Naive thymus-derived CD4-positive, alpha-beta T cell (primary cell): ENCODE measurements at regions of chr15 and their contacts with region 1.

Region 1: GRCh38 chr15:40307421-40308211 is at the start of gene PLCB2:
- DNase-seq: peak; percentile 57 to 83 (median 79)
- ATAC-seq: peak; percentile 83
- H3K4me3 ChIP-seq: peak within 1 kb of the TSS; percentile 99
- H3K4me3 Mint-ChIP-seq: peak within 1 kb of the TSS; percentile 93 to 99 (median 96)
- H3K27ac ChIP-seq: peak within 1 kb of the TSS; percentile 94
- H3K27ac Mint-ChIP-seq: peak within 1 kb of the TSS; percentile 93 to 99 (median 97)
- H3K4me1 ChIP-seq: peaks cover 16 to 22% of the 10 kb centered on the region in 2 donors
- H3K4me1 Mint-ChIP-seq: peaks cover 31 to 62% (median 48%) of the 10 kb centered on the region in 7 donors
- H3K27me3 ChIP-seq: no peaks in the 10 kb centered on the region
- H3K27me3 Mint-ChIP-seq: peaks cover 0 to 13% (median 0%) of the 10 kb centered on the region in 5 donors
- total RNA-seq, gene PLCB2: 179 to 359 (median 186) TPM

Region 2: DNA sequence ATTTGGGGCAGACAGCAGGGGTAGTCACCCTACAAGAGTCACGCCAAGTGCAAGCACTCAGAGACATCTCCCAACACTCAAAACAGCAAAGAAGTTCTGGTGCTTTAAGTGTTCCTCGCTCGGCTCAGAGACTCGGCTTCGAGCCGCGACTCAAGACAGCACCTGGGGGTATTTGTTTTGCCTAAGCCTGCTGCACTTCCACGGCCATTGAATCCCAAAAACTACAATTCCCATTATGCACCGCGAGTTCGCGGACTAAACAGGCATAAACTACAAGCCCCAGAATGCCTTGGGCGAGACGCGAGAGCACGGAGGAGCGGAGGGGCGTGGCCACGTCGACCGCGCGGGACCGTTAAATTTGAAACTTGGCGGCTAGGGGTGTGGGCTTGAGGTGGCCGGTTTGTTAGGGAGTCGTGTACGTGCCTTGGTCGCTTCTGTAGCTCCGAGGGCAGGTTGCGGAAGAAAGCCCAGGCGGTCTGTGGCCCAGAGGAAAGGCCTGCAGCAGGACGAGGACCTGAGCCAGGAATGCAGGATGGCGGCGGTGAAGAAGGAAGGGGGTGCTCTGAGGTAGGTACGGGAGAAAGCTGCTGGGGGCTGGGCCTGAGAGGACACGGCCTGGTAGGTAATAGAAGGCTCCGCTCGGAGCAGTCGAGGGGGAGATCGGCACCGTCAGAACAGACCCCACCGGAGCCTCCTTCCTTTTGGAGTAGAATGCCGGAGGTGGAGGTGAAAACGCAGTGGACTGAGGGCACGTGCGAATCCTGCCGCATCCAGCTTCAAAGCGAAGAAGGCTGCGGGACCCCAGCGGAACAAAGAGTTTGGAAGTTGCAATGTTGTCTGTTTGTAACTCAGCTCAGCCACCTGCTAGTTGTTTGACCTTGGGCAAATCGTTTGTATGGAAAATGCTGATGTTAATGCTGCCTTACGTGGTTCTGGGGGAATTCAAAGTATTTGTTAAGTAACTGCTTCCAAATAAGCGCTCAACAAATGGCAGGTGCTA is 146.6 kb before region 1 on chr15 and contains the start of gene BUB1B:
- CTCF ChIA-PET with region 1: interaction called, 3 read pairs
- POLR2A ChIA-PET with region 1: no interaction called
- intact Hi-C with region 1: loop called in 1 of 2 experiments (anchors 2 kb)
- DNase-seq: peak; percentile 79 to 94 (median 92)
- ATAC-seq: peak; percentile 100
- H3K4me3 ChIP-seq: peak within 1 kb of the TSS; percentile 80
- H3K4me3 Mint-ChIP-seq: peak within 1 kb of the TSS in 2 of 10 donors; percentile 15 to 51
- H3K27ac ChIP-seq: peak within 1 kb of the TSS; percentile 29
- H3K27ac Mint-ChIP-seq: no peak within 1 kb of the TSS
- H3K4me1 ChIP-seq: peaks cover 0 to 7% of the 10 kb centered on the region in 2 donors
- H3K4me1 Mint-ChIP-seq: peaks cover 0 to 12% (median 0%) of the 10 kb centered on the region in 7 donors
- H3K27me3 ChIP-seq: no peaks in the 10 kb centered on the region
- H3K27me3 Mint-ChIP-seq: no peaks in the 10 kb centered on the region
- total RNA-seq, gene BUB1B: 0.41 to 55.7 (median 1.2) TPM

Region 3: GRCh38 chr15:40232625-40233070 is 75.0 kb before region 1 on chr15:
- CTCF ChIA-PET with region 1: no interaction called
- POLR2A ChIA-PET with region 1: no interaction called
- intact Hi-C with region 1: no loop called
- DNase-seq: no peak
- ATAC-seq: no peak
- H3K4me3 ChIP-seq: no peak overlapping the region
- H3K4me3 Mint-ChIP-seq: no peak overlapping the region
- H3K27ac ChIP-seq: no peak overlapping the region
- H3K27ac Mint-ChIP-seq: no peak overlapping the region
- H3K4me1 ChIP-seq: no peaks in the 10 kb centered on the region
- H3K4me1 Mint-ChIP-seq: peaks cover 0 to 3% (median 0%) of the 10 kb centered on the region in 7 donors
- H3K27me3 ChIP-seq: no peaks in the 10 kb centered on the region
- H3K27me3 Mint-ChIP-seq: peaks cover 1 to 5% (median 1%) of the 10 kb centered on the region in 5 donors

Region 4: DNA sequence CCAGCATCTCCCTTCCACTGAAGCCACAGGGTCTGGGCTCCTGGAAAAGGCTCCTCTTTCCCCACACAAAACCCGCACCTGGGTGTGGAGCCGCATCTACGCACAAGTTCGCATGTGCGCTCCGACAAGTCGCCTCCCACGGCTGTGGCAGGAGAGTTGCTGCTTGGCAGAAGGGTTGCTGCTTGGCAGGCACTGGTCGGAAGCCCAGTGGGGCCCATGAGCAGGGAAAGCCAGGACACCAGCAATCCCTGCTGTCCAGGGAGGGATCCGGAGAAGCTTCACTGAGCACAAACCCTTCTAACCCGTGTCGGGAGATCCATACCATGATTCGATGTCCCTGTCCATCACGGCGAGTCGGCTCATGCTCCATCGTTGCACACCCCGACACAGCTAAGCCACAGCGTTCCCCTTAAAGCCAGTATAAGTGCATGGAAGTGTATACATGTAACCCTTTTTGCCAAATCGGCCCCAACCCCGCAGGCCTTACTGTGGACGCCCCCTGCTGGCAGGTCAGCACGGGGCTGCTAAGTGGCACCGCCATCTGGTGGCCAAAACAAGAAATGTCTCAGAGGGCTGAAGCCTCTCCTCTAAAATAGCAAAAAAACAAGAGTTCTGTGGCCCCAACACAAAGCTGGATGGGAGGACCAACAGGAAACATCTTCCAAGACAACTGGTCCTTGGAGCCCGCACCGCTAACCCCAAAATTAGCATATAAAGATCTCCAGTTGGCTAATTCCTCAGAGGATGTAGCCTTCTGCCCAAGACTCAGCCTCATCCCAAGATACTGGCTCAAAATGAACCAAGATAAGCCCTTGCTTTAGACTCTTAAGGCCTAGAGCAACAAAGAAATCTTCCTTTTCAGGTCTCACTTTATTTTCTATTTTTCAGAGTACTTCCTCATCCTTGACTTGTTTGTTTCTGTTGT is 33.0 kb before region 1 on chr15:
- CTCF ChIA-PET with region 1: interaction called, 143 read pairs
- POLR2A ChIA-PET with region 1: interaction called, 29 read pairs
- intact Hi-C with region 1: loop called (anchors 1 kb)
- DNase-seq: peak; percentile 71 to 95 (median 88)
- ATAC-seq: peak; percentile 94
- H3K4me3 ChIP-seq: no peak overlapping the region
- H3K4me3 Mint-ChIP-seq: peak overlapping the region in 1 of 10 donors; percentile 45
- H3K27ac ChIP-seq: no peak overlapping the region
- H3K27ac Mint-ChIP-seq: peak overlapping the region in 6 of 9 donors; percentile 17 to 70 (median 50)
- H3K4me1 ChIP-seq: peaks cover 0 to 3% of the 10 kb centered on the region in 2 donors
- H3K4me1 Mint-ChIP-seq: peaks cover 0 to 17% (median 5%) of the 10 kb centered on the region in 7 donors
- H3K27me3 ChIP-seq: no peaks in the 10 kb centered on the region
- H3K27me3 Mint-ChIP-seq: peaks cover 12 to 29% (median 16%) of the 10 kb centered on the region in 5 donors

Region 5: GRCh38 chr15:40290918-40291574 is 16.6 kb before region 1 on chr15:
- CTCF ChIA-PET with region 1: interaction called, 5 read pairs
- POLR2A ChIA-PET with region 1: interaction called, 30 read pairs
- intact Hi-C with region 1: no loop called
- DNase-seq: no peak
- ATAC-seq: no peak
- H3K4me3 ChIP-seq: no peak overlapping the region
- H3K4me3 Mint-ChIP-seq: no peak overlapping the region
- H3K27ac ChIP-seq: no peak overlapping the region
- H3K27ac Mint-ChIP-seq: no peak overlapping the region
- H3K4me1 ChIP-seq: no peaks in the 10 kb centered on the region
- H3K4me1 Mint-ChIP-seq: peaks cover 0 to 4% (median 0%) of the 10 kb centered on the region in 7 donors
- H3K27me3 ChIP-seq: no peaks in the 10 kb centered on the region
- H3K27me3 Mint-ChIP-seq: no peaks in the 10 kb centered on the region

Region 6: GRCh38 chr15:40330368-40330836 is 22.8 kb after region 1 on chr15:
- CTCF ChIA-PET with region 1: interaction called, 366 read pairs
- POLR2A ChIA-PET with region 1: interaction called, 35 read pairs
- intact Hi-C with region 1: no loop called
- DNase-seq: no peak
- ATAC-seq: no peak
- H3K4me3 ChIP-seq: no peak overlapping the region
- H3K4me3 Mint-ChIP-seq: no peak overlapping the region
- H3K27ac ChIP-seq: no peak overlapping the region
- H3K27ac Mint-ChIP-seq: no peak overlapping the region
- H3K4me1 ChIP-seq: peaks cover 0 to 15% of the 10 kb centered on the region in 2 donors
- H3K4me1 Mint-ChIP-seq: peaks cover 1 to 45% (median 39%) of the 10 kb centered on the region in 7 donors
- H3K27me3 ChIP-seq: no peaks in the 10 kb centered on the region
- H3K27me3 Mint-ChIP-seq: peaks cover 0 to 2% (median 0%) of the 10 kb centered on the region in 5 donors

Region 7: DNA sequence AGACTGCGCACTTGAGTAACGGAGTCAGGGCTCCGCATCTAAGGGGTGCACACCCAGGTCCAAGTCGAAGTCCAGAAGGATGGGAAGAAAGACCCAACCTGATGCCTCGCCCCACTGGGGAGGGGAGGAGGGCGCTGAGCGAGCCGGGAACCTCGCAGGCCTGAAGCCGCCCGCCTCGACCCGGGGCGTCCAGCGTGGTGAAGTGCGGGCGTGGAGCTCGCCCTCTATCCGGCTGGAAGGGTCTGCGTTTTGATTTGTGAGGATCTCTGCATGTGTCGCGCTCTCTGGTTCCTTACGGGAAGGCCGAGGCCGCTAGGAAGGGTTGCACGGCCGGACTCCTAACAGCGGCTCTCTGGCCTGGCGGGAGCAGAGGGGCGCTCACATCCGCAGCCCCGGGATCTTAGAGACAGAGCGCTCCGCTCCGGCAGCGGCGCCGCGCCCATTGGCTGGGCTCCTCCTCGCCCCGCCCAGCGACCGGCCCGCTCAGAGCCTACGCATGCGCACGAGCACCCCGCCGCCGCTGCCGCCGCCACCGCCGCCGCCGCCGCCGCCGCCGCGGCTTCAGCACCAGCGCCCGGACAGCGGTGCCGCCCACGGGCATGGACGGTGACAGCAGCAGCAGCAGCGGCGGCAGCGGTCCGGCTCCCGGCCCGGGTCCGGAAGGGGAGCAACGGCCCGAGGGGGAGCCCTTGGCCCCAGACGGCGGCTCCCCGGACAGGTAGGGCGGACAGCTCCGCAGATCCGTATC is 50.3 kb after region 1 on chr15 and contains the start of gene DISP2:
- CTCF ChIA-PET with region 1: no interaction called
- POLR2A ChIA-PET with region 1: no interaction called
- intact Hi-C with region 1: loop called in 1 of 2 experiments (anchors 5 kb)
- DNase-seq: peak; percentile 80 to 97 (median 91)
- ATAC-seq: peak; percentile 94
- H3K4me3 ChIP-seq: peak within 1 kb of the TSS; percentile 63
- H3K4me3 Mint-ChIP-seq: peak within 1 kb of the TSS; percentile 75 to 90 (median 83)
- H3K27ac ChIP-seq: no peak within 1 kb of the TSS
- H3K27ac Mint-ChIP-seq: peak within 1 kb of the TSS in 2 of 9 donors; percentile 38 to 48
- H3K4me1 ChIP-seq: peaks cover 0 to 12% of the 10 kb centered on the region in 2 donors
- H3K4me1 Mint-ChIP-seq: peaks cover 7 to 15% (median 13%) of the 10 kb centered on the region in 7 donors
- H3K27me3 ChIP-seq: no peaks in the 10 kb centered on the region
- H3K27me3 Mint-ChIP-seq: peaks cover 0 to 30% (median 9%) of the 10 kb centered on the region in 5 donors
- total RNA-seq, gene DISP2: 0.05 to 0.51 (median 0.07) TPM in 4 of 5 experiments, not detected in the other